Activated naive CD4-positive, alpha-beta T cell treated with anti-CD3 and anti-CD28 coated beads for 36 hours (primary cell): ENCODE measurements at regions of chr15 and their contacts with region 1.

Region 1: GRCh38 chr15:57586661-57587424 is 4.9 kb upstream of the MYZAP start:
- DNase-seq: no peak
- H3K4me3 Mint-ChIP-seq: no peak overlapping the region
- H3K27ac Mint-ChIP-seq: peak overlapping the region; percentile 78
- H3K4me1 Mint-ChIP-seq: peaks cover 39% of the 10 kb centered on the region
- H3K27me3 Mint-ChIP-seq: peaks cover 6% of the 10 kb centered on the region

Region 2: DNA sequence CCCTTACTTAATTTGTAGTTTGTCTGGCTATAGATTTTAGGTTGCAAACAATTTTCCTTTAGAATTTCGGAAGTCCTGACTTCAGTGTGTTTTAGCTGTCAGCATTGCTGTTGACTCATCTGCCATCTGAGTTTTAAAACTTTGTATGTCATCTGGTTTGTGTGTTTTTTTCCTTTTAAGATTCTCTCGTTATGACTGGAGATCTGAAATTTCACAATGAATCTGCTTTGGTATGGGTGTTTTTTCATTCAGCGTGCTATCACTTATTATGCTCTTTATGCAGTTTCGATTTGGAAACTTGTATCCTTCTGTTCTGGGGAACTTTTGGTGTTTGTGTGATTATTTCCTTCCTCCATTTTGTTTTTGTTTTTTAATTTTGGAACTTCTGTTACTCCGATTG is 799.9 kb before region 1 on chr15:
- CTCF ChIA-PET with region 1: no interaction called
- intact Hi-C with region 1: loop called (anchors 1 kb)
- DNase-seq: no peak
- H3K4me3 Mint-ChIP-seq: no peak overlapping the region
- H3K27ac Mint-ChIP-seq: no peak overlapping the region
- H3K4me1 Mint-ChIP-seq: peaks cover 11% of the 10 kb centered on the region
- H3K27me3 Mint-ChIP-seq: peaks cover 6% of the 10 kb centered on the region

Region 3: DNA sequence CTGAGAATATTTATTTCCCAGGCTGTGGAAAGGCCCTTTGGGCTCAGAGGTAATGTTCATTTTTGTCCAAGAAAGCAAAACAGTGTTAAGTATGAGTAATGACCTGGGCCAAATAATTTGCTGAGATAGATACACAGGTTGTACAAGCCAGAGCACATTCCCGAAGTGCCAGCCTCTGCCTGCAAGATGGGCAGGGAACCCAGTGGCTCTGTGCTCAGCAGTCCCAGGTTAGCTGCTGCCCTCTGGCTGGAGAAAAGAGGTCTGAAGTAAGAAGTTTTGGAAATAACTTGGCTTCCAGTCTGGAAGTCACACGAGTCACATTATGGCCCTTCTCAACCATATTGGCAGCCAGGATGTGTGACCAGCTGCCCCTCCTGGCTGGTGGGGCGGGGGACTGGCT is 25.1 kb after region 1 on chr15:
- CTCF ChIA-PET with region 1: no interaction called
- intact Hi-C with region 1: loop called (anchors 2 kb)
- DNase-seq: peak; percentile 43
- H3K4me3 Mint-ChIP-seq: no peak overlapping the region
- H3K27ac Mint-ChIP-seq: no peak overlapping the region
- H3K4me1 Mint-ChIP-seq: no peaks in the 10 kb centered on the region
- H3K27me3 Mint-ChIP-seq: no peaks in the 10 kb centered on the region

Region 4: DNA sequence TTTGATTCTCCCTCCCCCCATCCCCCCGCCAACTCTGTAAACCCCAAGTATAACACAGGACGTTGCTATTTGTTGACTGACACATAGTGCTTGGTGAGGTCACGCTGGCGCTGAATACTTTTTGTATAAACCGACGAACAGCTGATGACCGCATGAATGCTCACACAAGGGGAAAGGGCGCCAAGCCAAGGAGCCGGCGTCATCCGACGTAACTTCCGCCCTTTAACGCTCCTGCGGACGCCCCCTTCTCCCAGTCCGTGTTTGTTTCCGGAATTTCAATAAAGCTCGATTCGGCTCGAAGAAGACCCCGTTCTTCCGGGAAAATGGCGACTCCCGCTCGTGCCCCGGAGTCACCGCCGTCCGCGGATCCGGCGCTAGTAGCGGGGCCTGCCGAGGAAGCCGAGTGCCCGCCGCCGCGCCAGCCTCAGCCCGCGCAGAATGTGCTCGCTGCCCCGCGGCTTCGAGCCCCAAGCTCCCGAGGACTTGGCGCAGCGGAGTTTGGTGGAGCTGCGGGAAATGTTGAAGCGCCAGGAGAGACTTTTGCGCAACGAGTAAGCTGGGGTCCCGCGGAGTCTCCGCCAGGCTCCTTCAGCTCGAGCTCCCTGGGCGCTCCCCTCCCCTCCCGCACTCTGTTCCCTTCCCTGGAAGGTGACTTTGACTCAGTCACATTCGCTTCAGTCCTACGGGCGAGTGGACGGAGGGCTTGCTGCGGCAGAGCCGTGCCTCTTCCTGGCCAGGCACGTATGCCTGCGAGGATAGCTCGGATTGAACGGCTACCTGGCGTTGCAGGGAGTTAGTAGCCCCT is 119.8 kb after region 1 on chr15 and contains the start of gene POLR2M:
- CTCF ChIA-PET with region 1: interaction called, 4 read pairs
- intact Hi-C with region 1: loop called (anchors 1 kb)
- DNase-seq: peak; percentile 98
- H3K4me3 Mint-ChIP-seq: peak within 1 kb of the TSS; percentile 90
- H3K27ac Mint-ChIP-seq: peak within 1 kb of the TSS; percentile 93
- H3K4me1 Mint-ChIP-seq: peaks cover 79% of the 10 kb centered on the region
- H3K27me3 Mint-ChIP-seq: no peaks in the 10 kb centered on the region
- total RNA-seq, gene POLR2M: 107 to 114 TPM

Region 5: DNA sequence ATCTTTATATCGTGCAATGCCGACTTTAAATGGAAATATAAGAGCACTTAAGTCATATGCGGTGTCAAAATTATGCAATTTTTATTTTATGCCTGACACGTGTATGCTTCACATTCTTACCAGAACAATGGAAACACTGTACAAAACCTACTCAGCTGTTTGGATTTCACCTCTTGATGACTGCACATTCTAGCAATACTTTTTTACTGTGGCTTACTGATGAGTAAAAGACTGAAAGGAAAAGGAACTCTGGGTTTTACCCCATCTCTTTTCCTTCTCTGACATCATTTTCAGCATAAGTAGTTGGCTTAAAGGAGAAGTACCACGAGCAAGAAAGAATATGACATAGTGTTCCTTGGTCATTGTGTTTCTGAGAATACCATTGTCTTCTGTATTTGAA is 262.5 kb after region 1 on chr15:
- CTCF ChIA-PET with region 1: no interaction called
- intact Hi-C with region 1: loop called (anchors 1 kb)
- DNase-seq: no peak
- H3K4me3 Mint-ChIP-seq: no peak overlapping the region
- H3K27ac Mint-ChIP-seq: no peak overlapping the region
- H3K4me1 Mint-ChIP-seq: peaks cover 15% of the 10 kb centered on the region
- H3K27me3 Mint-ChIP-seq: peaks cover 12% of the 10 kb centered on the region